CD8-positive, alpha-beta memory T cell (primary cell): ENCODE measurements at regions of chr2 and their contacts with region 1.

Region 1: GRCh38 chr2:74147727-74148456 is at the start of gene BOLA3:
- DNase-seq: peak; percentile 73 to 82 (median 78)
- H3K4me3 ChIP-seq: peak within 1 kb of the TSS; percentile 82
- H3K4me3 Mint-ChIP-seq: no peak within 1 kb of the TSS
- H3K27ac ChIP-seq: peak within 1 kb of the TSS; percentile 55
- H3K27ac Mint-ChIP-seq: peak within 1 kb of the TSS in 1 of 8 donors; percentile 26
- H3K4me1 ChIP-seq: peaks cover 12% of the 10 kb centered on the region
- H3K4me1 Mint-ChIP-seq: peaks cover 5 to 9% (median 6%) of the 10 kb centered on the region in 3 donors
- H3K27me3 ChIP-seq: no peaks in the 10 kb centered on the region
- H3K27me3 Mint-ChIP-seq: no peaks in the 10 kb centered on the region
- total RNA-seq, gene BOLA3: 131 to 133 TPM

Region 2: DNA sequence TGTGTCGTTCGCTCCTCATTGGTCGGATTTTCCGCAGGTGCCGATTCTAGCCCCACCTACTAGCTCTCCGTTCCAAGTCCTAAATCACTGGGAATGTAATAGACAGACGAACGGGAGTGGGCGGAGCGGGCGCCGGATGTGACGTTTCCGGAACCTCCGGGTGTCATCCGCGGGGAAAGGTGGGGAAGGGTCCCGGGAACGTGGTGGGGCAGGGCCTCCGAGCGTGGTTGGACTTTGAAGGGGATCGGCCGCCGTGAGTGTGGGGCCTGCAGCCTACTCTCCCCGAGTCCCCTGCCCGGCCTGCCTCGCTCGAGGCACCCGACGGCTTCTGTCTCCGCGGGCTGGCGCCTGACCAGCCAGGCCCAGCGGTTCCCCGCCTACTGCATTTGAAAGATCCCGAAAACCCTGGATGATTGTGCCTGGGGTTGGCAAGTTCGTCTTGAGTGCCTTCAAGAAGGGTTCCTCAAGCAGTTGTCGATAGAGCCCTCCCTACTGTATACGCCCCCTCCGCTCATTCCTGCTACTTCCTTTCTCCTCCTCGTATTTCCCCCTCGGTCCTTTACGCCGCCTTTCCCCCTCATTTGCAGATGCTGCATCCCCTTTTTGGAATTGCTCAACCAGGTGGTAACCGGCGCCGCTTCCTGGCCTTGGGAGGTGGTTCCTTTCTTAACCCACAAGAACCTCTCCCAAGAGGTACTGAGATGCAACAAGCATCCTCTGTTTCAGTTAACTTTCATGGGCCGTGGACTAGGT is 318.9 kb before region 1 on chr2 and contains the start of gene STAMBP:
- CTCF ChIA-PET with region 1: interaction called, 13 read pairs
- POLR2A ChIA-PET with region 1: no interaction called
- DNase-seq: peak; percentile 86 to 94 (median 90)
- H3K4me3 ChIP-seq: peak within 1 kb of the TSS; percentile 92
- H3K4me3 Mint-ChIP-seq: peak within 1 kb of the TSS; percentile 82 to 98 (median 96)
- H3K27ac ChIP-seq: peak within 1 kb of the TSS; percentile 93
- H3K27ac Mint-ChIP-seq: peak within 1 kb of the TSS; percentile 94 to 100 (median 99)
- H3K4me1 ChIP-seq: peaks cover 32% of the 10 kb centered on the region
- H3K4me1 Mint-ChIP-seq: peaks cover 46 to 61% (median 52%) of the 10 kb centered on the region in 3 donors
- H3K27me3 ChIP-seq: no peaks in the 10 kb centered on the region
- H3K27me3 Mint-ChIP-seq: no peaks in the 10 kb centered on the region
- total RNA-seq, gene STAMBP: 71.7 to 71.9 TPM

Region 3: GRCh38 chr2:73907840-73908452 is 239.9 kb before region 1 on chr2:
- CTCF ChIA-PET with region 1: interaction called, 13 read pairs
- POLR2A ChIA-PET with region 1: no interaction called
- DNase-seq: peak; percentile 16 to 69 (median 35)
- H3K4me3 ChIP-seq: no peak overlapping the region
- H3K4me3 Mint-ChIP-seq: no peak overlapping the region
- H3K27ac ChIP-seq: no peak overlapping the region
- H3K27ac Mint-ChIP-seq: peak overlapping the region in 3 of 8 donors; percentile 43 to 66 (median 63)
- H3K4me1 ChIP-seq: no peaks in the 10 kb centered on the region
- H3K4me1 Mint-ChIP-seq: peaks cover 0 to 3% (median 0%) of the 10 kb centered on the region in 3 donors
- H3K27me3 ChIP-seq: no peaks in the 10 kb centered on the region
- H3K27me3 Mint-ChIP-seq: peaks cover 0 to 2% of the 10 kb centered on the region in 2 donors

Region 4: GRCh38 chr2:74119912-74120825 is 27.7 kb before region 1 on chr2:
- CTCF ChIA-PET with region 1: interaction called, 16 read pairs
- POLR2A ChIA-PET with region 1: interaction called, 7 read pairs
- DNase-seq: peak; percentile 69 to 87 (median 78)
- H3K4me3 ChIP-seq: peak overlapping the region; percentile 75
- H3K4me3 Mint-ChIP-seq: peak overlapping the region; percentile 84 to 95 (median 89)
- H3K27ac ChIP-seq: peak overlapping the region; percentile 76
- H3K27ac Mint-ChIP-seq: peak overlapping the region; percentile 66 to 97 (median 92)
- H3K4me1 ChIP-seq: peaks cover 7% of the 10 kb centered on the region
- H3K4me1 Mint-ChIP-seq: peaks cover 9 to 13% (median 12%) of the 10 kb centered on the region in 3 donors
- H3K27me3 ChIP-seq: no peaks in the 10 kb centered on the region
- H3K27me3 Mint-ChIP-seq: peaks cover 2 to 5% of the 10 kb centered on the region in 2 donors

Region 5: GRCh38 chr2:74168739-74169138 is 20.8 kb after region 1 on chr2:
- CTCF ChIA-PET with region 1: interaction called, 14 read pairs
- POLR2A ChIA-PET with region 1: no interaction called
- DNase-seq: no peak
- H3K4me3 ChIP-seq: no peak overlapping the region
- H3K4me3 Mint-ChIP-seq: no peak overlapping the region
- H3K27ac ChIP-seq: no peak overlapping the region
- H3K27ac Mint-ChIP-seq: peak overlapping the region in 3 of 8 donors; percentile 3 to 61 (median 39)
- H3K4me1 ChIP-seq: peaks cover 13% of the 10 kb centered on the region
- H3K4me1 Mint-ChIP-seq: peaks cover 20 to 44% (median 27%) of the 10 kb centered on the region in 3 donors
- H3K27me3 ChIP-seq: no peaks in the 10 kb centered on the region
- H3K27me3 Mint-ChIP-seq: no peaks in the 10 kb centered on the region

Region 6: DNA sequence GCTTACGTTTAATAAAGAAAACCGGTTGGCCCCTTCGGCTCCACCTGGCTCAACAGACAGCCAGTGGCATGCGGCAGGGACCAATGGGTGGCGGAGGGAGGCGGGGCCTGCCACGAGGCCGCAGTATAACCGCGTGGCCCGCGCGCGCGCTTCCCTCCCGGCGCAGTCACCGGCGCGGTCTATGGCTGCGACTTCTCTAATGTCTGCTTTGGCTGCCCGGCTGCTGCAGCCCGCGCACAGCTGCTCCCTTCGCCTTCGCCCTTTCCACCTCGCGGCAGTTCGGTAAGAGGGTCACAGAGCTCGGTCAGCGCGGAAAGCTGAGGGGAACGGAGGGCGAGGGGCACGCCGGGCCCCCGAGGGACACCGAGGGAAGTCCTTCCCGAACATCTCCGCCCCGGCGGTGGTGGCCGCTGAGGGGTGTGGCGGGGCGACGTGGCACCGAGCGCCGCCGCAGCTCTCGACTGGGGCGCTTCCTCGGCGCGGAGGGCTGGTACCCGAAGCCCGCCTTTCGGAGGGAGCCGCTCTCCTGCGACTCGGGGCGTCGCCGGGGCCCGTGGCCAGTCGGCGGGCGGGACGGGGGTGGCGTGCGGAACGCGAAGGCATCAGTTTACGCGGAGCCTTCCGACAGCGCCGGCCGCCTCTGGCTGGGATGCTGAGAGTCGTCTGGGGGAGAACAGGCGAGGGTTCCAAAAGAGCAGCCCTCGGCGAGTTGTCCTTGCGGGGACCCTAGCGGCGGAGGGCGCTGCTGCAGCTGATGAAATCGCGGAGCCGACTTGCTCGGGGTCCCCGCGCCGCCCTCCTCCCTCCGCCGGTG is 50.8 kb after region 1 on chr2 and contains the start of gene MTHFD2:
- CTCF ChIA-PET with region 1: interaction called, 15 read pairs
- POLR2A ChIA-PET with region 1: interaction called, 7 read pairs
- DNase-seq: peak; percentile 82 to 91 (median 84)
- H3K4me3 ChIP-seq: peak within 1 kb of the TSS; percentile 97
- H3K4me3 Mint-ChIP-seq: peak within 1 kb of the TSS; percentile 90 to 100 (median 95)
- H3K27ac ChIP-seq: peak within 1 kb of the TSS; percentile 84
- H3K27ac Mint-ChIP-seq: peak within 1 kb of the TSS; percentile 85 to 100 (median 98)
- H3K4me1 ChIP-seq: peaks cover 23% of the 10 kb centered on the region
- H3K4me1 Mint-ChIP-seq: peaks cover 23 to 44% (median 40%) of the 10 kb centered on the region in 3 donors
- H3K27me3 ChIP-seq: no peaks in the 10 kb centered on the region
- H3K27me3 Mint-ChIP-seq: no peaks in the 10 kb centered on the region
- total RNA-seq, gene MTHFD2: 379 to 397 TPM